Ovary (tissue), 10 donors: ENCODE measurements at regions of chr10 and their contacts with region 1.

Region 1: DNA sequence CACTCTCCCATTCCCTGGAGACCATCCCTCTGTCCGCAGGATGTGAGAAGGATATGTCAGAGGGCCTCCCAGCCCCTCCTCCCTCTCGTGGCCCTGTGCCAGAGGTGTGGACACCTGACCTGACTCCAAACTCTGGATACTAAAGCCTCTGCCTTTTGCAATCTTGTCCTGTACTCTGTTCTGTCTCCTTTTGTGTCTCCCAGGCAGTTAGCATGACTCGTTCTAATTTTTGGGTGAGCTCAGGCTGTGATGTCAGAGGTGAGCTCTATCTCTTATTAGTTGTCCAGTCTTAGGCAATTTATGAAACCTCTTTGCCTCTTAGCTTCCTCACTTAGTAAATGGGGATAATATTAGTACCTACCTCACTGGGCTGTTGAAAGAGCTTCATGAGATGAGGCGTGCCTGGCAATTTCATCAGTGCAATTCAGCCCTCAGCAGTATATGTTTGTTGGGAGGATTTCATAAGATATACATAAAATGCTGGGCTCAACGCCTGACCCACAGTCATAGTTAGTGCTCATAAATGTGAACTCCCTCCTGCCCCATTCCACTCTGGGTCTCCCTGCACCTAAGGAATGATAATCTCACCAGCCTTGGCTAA is 10.9 kb downstream of the MARVELD1 start:
- DNase-seq: no peak
- H3K4me3 ChIP-seq: no peak overlapping the region
- H3K27ac ChIP-seq: no peak overlapping the region
- H3K4me1 ChIP-seq: no peaks in the 10 kb centered on the region
- H3K27me3 ChIP-seq: no peaks in the 10 kb centered on the region
- CTCF ChIP-seq: no peak
- EP300 ChIP-seq: no peak
- POLR2A ChIP-seq: no peak

Region 2: GRCh38 chr10:97572214-97572989 is 152.0 kb before region 1 on chr10 and contains the start of gene ANKRD2:
- intact Hi-C with region 1: no loop called
- DNase-seq: peak; percentile 54 to 74 (median 59)
- H3K4me3 ChIP-seq: no peak within 1 kb of the TSS
- H3K27ac ChIP-seq: no peak within 1 kb of the TSS
- H3K4me1 ChIP-seq: no peaks in the 10 kb centered on the region
- H3K27me3 ChIP-seq: no peaks in the 10 kb centered on the region
- CTCF ChIP-seq: peak in 2 of 3 donors; percentile 43 to 64
- EP300 ChIP-seq: no peak
- POLR2A ChIP-seq: no peak
- total RNA-seq, gene ANKRD2: 0.37 to 0.46 (median 0.40) TPM in 3 of 7 donors, not detected in the others

Region 3: GRCh38 chr10:97686962-97687784 is 37.3 kb before region 1 on chr10 and contains the start of gene AVPI1:
- intact Hi-C with region 1: loop called in 1 of 4 experiments (anchors 5 kb)
- DNase-seq: peak; percentile 98 to 99 (median 98)
- H3K4me3 ChIP-seq: peak within 1 kb of the TSS; percentile 86
- H3K27ac ChIP-seq: peak within 1 kb of the TSS; percentile 88 to 92
- H3K4me1 ChIP-seq: peaks cover 18% of the 10 kb centered on the region
- H3K27me3 ChIP-seq: no peaks in the 10 kb centered on the region
- CTCF ChIP-seq: peak in 1 of 3 donors; percentile 11
- EP300 ChIP-seq: peak; percentile 92
- POLR2A ChIP-seq: peak; percentile 96
- total RNA-seq, gene AVPI1: 12.0 to 139 (median 31.8) TPM

Region 4: GRCh38 chr10:97780841-97781617 is 56.6 kb after region 1 on chr10:
- intact Hi-C with region 1: no loop called
- DNase-seq: no peak
- H3K4me3 ChIP-seq: no peak overlapping the region
- H3K27ac ChIP-seq: no peak overlapping the region
- H3K4me1 ChIP-seq: peaks cover 6% of the 10 kb centered on the region
- H3K27me3 ChIP-seq: no peaks in the 10 kb centered on the region
- CTCF ChIP-seq: no peak
- EP300 ChIP-seq: no peak
- POLR2A ChIP-seq: no peak